Calu3 (cell line): ENCODE measurements at regions of chr6 and their contacts with region 1.

Region 1: DNA sequence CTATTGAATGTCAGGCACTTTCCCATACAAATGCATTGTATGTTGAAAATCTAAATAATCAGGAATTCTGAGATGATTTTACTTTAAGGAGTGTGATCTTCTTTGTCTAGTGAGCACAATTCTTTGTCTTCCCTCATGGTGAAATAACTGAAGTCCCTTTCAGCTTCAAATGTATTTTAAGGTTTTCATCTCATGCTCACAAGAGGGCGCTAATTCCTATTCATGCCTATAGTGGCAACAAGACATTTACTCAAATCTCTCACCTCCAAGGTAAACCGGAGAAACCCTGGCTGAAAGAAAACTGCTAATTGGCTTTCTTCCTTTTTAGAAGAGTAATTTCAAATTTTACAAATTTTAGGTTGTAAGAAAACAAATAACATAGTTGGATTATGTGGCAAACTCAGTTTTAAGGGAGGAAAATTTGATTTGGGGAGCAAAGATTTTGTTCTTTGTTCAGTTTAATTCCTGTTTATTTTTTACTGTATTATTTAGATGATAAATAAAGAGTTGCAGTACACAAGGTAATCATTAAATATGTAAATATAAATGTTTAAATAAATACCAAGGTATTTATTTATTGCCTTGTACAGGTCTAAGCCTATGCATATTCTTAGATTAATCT is 69.1 kb downstream of the SLC35F1 start:
- DNase-seq: peak; percentile 16
- H3K4me3 Mint-ChIP-seq: no peak overlapping the region
- H3K27ac Mint-ChIP-seq: no peak overlapping the region
- H3K4me1 Mint-ChIP-seq: no peaks in the 10 kb centered on the region
- H3K27me3 Mint-ChIP-seq: peaks cover 14% of the 10 kb centered on the region
- CTCF ChIP-seq: peak; percentile 50

Region 2: GRCh38 chr6:118263921-118264486 is 287.9 kb after region 1 on chr6:
- CTCF ChIA-PET with region 1: no interaction called
- intact Hi-C with region 1: loop called (anchors 2 kb)
- DNase-seq: no peak
- H3K4me3 Mint-ChIP-seq: no peak overlapping the region
- H3K27ac Mint-ChIP-seq: no peak overlapping the region
- H3K4me1 Mint-ChIP-seq: no peaks in the 10 kb centered on the region
- H3K27me3 Mint-ChIP-seq: no peaks in the 10 kb centered on the region
- CTCF ChIP-seq: no peak

Region 3: DNA sequence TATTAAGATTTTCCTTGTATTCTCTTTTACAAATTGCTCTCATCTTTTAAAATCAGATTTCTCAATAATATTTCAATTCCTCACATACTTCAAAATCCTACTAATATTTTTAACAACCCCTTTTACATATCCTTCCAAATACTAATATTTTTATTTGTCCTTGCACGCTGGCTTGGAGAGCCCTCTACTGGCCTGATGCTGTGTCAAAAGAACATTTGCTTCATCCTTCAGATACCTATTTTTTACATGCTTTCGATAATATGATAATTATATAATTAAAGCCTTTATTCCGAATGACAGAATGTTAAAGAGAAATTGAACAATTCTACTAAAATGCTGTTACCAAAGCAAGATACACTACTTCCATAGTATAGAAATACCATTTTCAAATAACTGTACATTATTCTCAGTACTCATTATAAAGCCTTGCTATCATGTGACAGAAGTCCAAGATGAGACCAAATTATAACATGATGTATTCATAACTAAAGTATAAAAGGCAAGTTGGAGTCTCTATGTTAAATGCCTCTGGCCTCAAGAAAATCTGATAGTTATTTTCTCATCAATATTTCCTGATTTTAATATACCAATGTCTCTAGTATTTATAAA is 533.0 kb after region 1 on chr6:
- CTCF ChIA-PET with region 1: no interaction called
- intact Hi-C with region 1: loop called (anchors 2 kb)
- DNase-seq: peak; percentile 34
- H3K4me3 Mint-ChIP-seq: no peak overlapping the region
- H3K27ac Mint-ChIP-seq: no peak overlapping the region
- H3K4me1 Mint-ChIP-seq: no peaks in the 10 kb centered on the region
- H3K27me3 Mint-ChIP-seq: no peaks in the 10 kb centered on the region
- CTCF ChIP-seq: no peak

Region 4: GRCh38 chr6:118551063-118552053 is 575.2 kb after region 1 on chr6:
- CTCF ChIA-PET with region 1: no interaction called
- intact Hi-C with region 1: loop called (anchors 2 kb)
- DNase-seq: peak; percentile 16
- H3K4me3 Mint-ChIP-seq: no peak overlapping the region
- H3K27ac Mint-ChIP-seq: no peak overlapping the region
- H3K4me1 Mint-ChIP-seq: peaks cover 5% of the 10 kb centered on the region
- H3K27me3 Mint-ChIP-seq: no peaks in the 10 kb centered on the region
- CTCF ChIP-seq: peak; percentile 15

Region 5: GRCh38 chr6:118618679-118619377 is 642.7 kb after region 1 on chr6:
- CTCF ChIA-PET with region 1: no interaction called
- intact Hi-C with region 1: loop called (anchors 10 kb)
- DNase-seq: peak; percentile 72
- H3K4me3 Mint-ChIP-seq: no peak overlapping the region
- H3K27ac Mint-ChIP-seq: no peak overlapping the region
- H3K4me1 Mint-ChIP-seq: no peaks in the 10 kb centered on the region
- H3K27me3 Mint-ChIP-seq: no peaks in the 10 kb centered on the region
- CTCF ChIP-seq: peak; percentile 59